ENCODE measurements at regions of chr1 and their contacts with region 1.

Region 1: GRCh38 chr1:215526553-215527151 is 40.5 kb upstream of the KCTD3 start:
- DNase-seq: no peak
- H3K4me3 Mint-ChIP-seq: no peak overlapping the region
- H3K27ac Mint-ChIP-seq: no peak overlapping the region
- H3K4me1 Mint-ChIP-seq: peaks cover 24% of the 10 kb centered on the region
- H3K27me3 Mint-ChIP-seq: no peaks in the 10 kb centered on the region
- CTCF ChIP-seq: peak; percentile 59

Region 2: GRCh38 chr1:214328770-214329469 is 1197.7 kb before region 1 on chr1:
- CTCF ChIA-PET with region 1: interaction called, 4 read pairs
- intact Hi-C with region 1: loop called (anchors 5 kb)
- DNase-seq: peak; percentile 83
- H3K4me3 Mint-ChIP-seq: no peak overlapping the region
- H3K27ac Mint-ChIP-seq: no peak overlapping the region
- H3K4me1 Mint-ChIP-seq: no peaks in the 10 kb centered on the region
- H3K27me3 Mint-ChIP-seq: no peaks in the 10 kb centered on the region
- CTCF ChIP-seq: peak; percentile 88

Region 3: DNA sequence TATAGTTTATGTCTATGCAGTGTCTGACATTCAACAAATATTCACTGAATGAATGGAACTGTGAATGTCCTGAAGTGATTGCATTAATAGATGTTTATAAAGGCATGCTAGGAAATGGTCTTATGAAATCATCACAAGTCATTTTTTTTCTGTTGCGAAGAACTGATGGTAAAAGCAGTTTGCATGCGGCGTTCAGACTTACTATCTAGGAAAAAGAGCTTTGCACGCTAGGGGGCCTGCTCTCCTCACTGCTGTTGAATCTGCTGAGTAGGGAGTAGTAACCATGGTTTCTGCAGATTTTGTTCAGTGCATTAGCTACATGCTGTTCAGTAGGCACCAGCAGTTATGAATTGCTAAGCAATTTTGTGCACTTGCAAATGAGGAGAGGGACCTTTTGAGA is 865.8 kb before region 1 on chr1:
- CTCF ChIA-PET with region 1: interaction called, 3 read pairs
- intact Hi-C with region 1: loop called (anchors 2 kb)
- DNase-seq: no peak
- H3K4me3 Mint-ChIP-seq: no peak overlapping the region
- H3K27ac Mint-ChIP-seq: no peak overlapping the region
- H3K4me1 Mint-ChIP-seq: no peaks in the 10 kb centered on the region
- H3K27me3 Mint-ChIP-seq: no peaks in the 10 kb centered on the region
- CTCF ChIP-seq: no peak

Region 4: DNA sequence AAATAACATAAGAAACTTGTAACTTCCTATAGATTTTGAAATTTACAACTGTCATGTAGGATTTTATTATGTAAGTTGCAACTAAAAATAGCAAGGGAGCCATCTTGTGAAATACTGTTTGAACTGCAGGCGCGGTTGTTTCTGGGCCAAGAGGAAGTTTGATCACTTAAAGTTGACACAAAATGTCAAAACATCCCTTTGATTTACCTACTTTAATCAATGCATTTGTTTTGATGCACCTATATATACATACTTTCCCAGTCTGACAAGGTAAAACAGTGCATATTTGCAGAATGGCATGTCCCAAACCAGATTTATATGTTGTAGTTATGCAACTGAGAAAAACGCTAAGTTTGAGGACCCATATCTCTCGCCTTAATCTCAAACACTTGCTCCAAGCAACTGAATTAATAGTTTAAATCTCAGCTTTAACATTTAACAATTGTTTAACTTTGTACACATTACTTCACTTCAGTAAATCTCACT is 380.3 kb before region 1 on chr1:
- CTCF ChIA-PET with region 1: interaction called, 3 read pairs
- intact Hi-C with region 1: loop called (anchors 2 kb)
- DNase-seq: peak; percentile 40
- H3K4me3 Mint-ChIP-seq: no peak overlapping the region
- H3K27ac Mint-ChIP-seq: no peak overlapping the region
- H3K4me1 Mint-ChIP-seq: no peaks in the 10 kb centered on the region
- H3K27me3 Mint-ChIP-seq: no peaks in the 10 kb centered on the region
- CTCF ChIP-seq: peak; percentile 64

Region 5: GRCh38 chr1:215273838-215274516 is 252.7 kb before region 1 on chr1:
- CTCF ChIA-PET with region 1: no interaction called
- intact Hi-C with region 1: loop called (anchors 10 kb)
- DNase-seq: no peak
- H3K4me3 Mint-ChIP-seq: no peak overlapping the region
- H3K27ac Mint-ChIP-seq: no peak overlapping the region
- H3K4me1 Mint-ChIP-seq: peaks cover 21% of the 10 kb centered on the region
- H3K27me3 Mint-ChIP-seq: no peaks in the 10 kb centered on the region
- CTCF ChIP-seq: no peak

Region 6: GRCh38 chr1:215507119-215507518 is 19.5 kb before region 1 on chr1:
- CTCF ChIA-PET with region 1: no interaction called
- intact Hi-C with region 1: no loop called
- DNase-seq: no peak
- H3K4me3 Mint-ChIP-seq: no peak overlapping the region
- H3K27ac Mint-ChIP-seq: no peak overlapping the region
- H3K4me1 Mint-ChIP-seq: no peaks in the 10 kb centered on the region
- H3K27me3 Mint-ChIP-seq: no peaks in the 10 kb centered on the region
- CTCF ChIP-seq: no peak

Region 7: GRCh38 chr1:215617979-215618378 is 91.3 kb after region 1 on chr1:
- CTCF ChIA-PET with region 1: no interaction called
- intact Hi-C with region 1: no loop called
- DNase-seq: no peak
- H3K4me3 Mint-ChIP-seq: no peak overlapping the region
- H3K27ac Mint-ChIP-seq: no peak overlapping the region
- H3K4me1 Mint-ChIP-seq: no peaks in the 10 kb centered on the region
- H3K27me3 Mint-ChIP-seq: no peaks in the 10 kb centered on the region
- CTCF ChIP-seq: no peak